CD4-positive, alpha-beta memory T cell (primary cell): ENCODE measurements at regions of chr4 and their contacts with region 1.

Region 1: DNA sequence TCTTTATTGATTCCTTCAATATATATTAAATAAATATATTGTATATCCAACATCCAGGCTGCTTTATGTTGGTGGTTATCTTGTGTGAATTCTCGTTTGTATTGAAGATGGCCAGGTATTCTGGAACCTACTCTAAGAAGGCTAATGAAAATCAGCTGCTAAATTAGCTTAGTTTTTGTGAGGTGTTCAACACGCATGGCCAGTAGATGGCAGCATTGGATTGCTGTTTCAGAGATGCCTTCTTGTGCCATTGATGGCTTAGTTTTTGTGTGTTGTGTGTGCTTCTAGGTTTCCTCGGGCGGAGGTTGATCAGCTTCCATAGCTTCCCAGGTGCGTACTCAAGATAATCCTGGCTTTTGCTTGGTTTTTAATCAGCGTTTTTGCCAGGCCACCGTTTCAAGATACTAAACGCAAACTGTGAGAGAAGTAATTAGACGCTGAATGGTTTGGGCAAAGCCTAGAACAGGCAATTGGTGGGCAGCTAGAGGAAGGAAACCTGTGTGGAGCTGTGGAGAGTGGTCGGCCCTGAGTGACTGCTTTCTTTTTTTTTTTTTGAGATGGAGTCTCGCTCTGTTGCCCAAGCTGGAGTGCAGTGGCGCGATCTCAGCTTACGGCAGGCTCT is 15.1 kb downstream of the NOCT start:
- DNase-seq: peak; percentile 72 to 76 (median 74)
- H3K4me3 ChIP-seq: no peak overlapping the region
- H3K4me3 Mint-ChIP-seq: no peak overlapping the region
- H3K27ac ChIP-seq: no peak overlapping the region
- H3K27ac Mint-ChIP-seq: peak overlapping the region in 5 of 7 donors; percentile 0 to 58 (median 19)
- H3K4me1 ChIP-seq: peaks cover 3% of the 10 kb centered on the region
- H3K4me1 Mint-ChIP-seq: peaks cover 6 to 11% (median 8%) of the 10 kb centered on the region in 4 donors
- H3K27me3 ChIP-seq: no peaks in the 10 kb centered on the region
- H3K27me3 Mint-ChIP-seq: no peaks in the 10 kb centered on the region

Region 2: GRCh38 chr4:138475116-138475515 is 555.6 kb before region 1 on chr4:
- CTCF ChIA-PET with region 1: no interaction called
- POLR2A ChIA-PET with region 1: no interaction called
- intact Hi-C with region 1: no loop called
- DNase-seq: no peak
- H3K4me3 ChIP-seq: no peak overlapping the region
- H3K4me3 Mint-ChIP-seq: no peak overlapping the region
- H3K27ac ChIP-seq: no peak overlapping the region
- H3K27ac Mint-ChIP-seq: no peak overlapping the region
- H3K4me1 ChIP-seq: no peaks in the 10 kb centered on the region
- H3K4me1 Mint-ChIP-seq: no peaks in the 10 kb centered on the region
- H3K27me3 ChIP-seq: no peaks in the 10 kb centered on the region
- H3K27me3 Mint-ChIP-seq: no peaks in the 10 kb centered on the region

Region 3: GRCh38 chr4:139015269-139015947 is 15.3 kb before region 1 on chr4 and contains the start of gene NOCT:
- CTCF ChIA-PET with region 1: interaction called, 122 read pairs
- POLR2A ChIA-PET with region 1: interaction called, 19 read pairs
- intact Hi-C with region 1: no loop called
- DNase-seq: peak; percentile 90 to 96 (median 93)
- H3K4me3 ChIP-seq: peak within 1 kb of the TSS; percentile 20 to 66
- H3K4me3 Mint-ChIP-seq: peak within 1 kb of the TSS; percentile 87 to 94 (median 90)
- H3K27ac ChIP-seq: peak within 1 kb of the TSS; percentile 84
- H3K27ac Mint-ChIP-seq: peak within 1 kb of the TSS; percentile 93 to 100 (median 99)
- H3K4me1 ChIP-seq: peaks cover 18% of the 10 kb centered on the region
- H3K4me1 Mint-ChIP-seq: peaks cover 13 to 44% (median 17%) of the 10 kb centered on the region in 4 donors
- H3K27me3 ChIP-seq: no peaks in the 10 kb centered on the region
- H3K27me3 Mint-ChIP-seq: no peaks in the 10 kb centered on the region
- total RNA-seq, gene NOCT: 1.4 to 1.7 TPM

Region 4: DNA sequence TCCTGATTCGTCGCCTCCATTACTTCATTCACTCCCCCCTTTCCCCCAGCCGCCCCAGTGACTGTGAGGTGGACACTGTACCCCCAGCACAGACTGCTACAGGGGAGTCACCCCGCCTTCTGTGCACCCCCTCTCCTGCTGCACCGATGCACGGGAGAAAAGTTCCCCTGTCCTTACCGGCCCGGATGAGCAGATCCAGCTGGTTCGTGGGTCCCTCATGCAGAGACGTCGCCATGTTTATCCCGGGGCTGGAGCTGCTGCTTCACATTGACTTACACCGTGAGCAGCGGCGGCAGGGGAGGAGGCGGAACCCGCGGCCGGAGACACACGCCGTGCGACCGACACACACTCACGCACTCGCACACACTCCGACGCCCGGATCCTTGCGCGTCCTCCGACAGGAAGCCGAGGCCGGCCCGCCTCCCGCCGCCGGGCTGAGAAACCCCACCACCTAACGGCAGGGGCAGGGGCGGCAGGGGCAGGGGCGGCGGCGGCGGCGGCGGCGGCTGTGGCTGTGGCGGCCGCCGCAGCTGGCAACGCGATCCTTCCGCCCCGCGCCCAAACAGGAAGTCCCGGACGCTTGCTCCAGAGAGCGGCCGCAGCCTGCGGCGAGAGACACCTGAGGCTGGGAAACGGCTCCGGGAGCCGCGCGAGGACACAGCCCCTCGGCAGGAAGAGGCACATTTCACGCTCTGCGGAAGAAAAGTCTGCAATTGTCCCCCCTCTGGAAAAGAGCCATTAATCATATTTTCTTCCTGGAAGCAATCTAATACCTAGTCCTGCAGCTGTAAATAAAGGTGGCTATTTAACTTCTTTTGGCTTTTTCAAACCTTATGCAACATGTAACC is 53.5 kb after region 1 on chr4:
- CTCF ChIA-PET with region 1: interaction called, 53 read pairs
- POLR2A ChIA-PET with region 1: interaction called, 25 read pairs
- intact Hi-C with region 1: loop called (anchors 1 kb)
- DNase-seq: peak; percentile 84 to 89 (median 85)
- H3K4me3 ChIP-seq: peak overlapping the region; percentile 73 to 99
- H3K4me3 Mint-ChIP-seq: peak overlapping the region; percentile 89 to 100 (median 92)
- H3K27ac ChIP-seq: peak overlapping the region; percentile 96
- H3K27ac Mint-ChIP-seq: peak overlapping the region; percentile 91 to 97 (median 94)
- H3K4me1 ChIP-seq: peaks cover 37% of the 10 kb centered on the region
- H3K4me1 Mint-ChIP-seq: peaks cover 26 to 52% (median 36%) of the 10 kb centered on the region in 4 donors
- H3K27me3 ChIP-seq: no peaks in the 10 kb centered on the region
- H3K27me3 Mint-ChIP-seq: no peaks in the 10 kb centered on the region

Region 5: GRCh38 chr4:139229534-139230039 is 198.9 kb after region 1 on chr4:
- CTCF ChIA-PET with region 1: interaction called, 16 read pairs
- POLR2A ChIA-PET with region 1: no interaction called
- intact Hi-C with region 1: loop called (anchors 1 kb)
- DNase-seq: peak in 4 of 5 donors; percentile 42 to 54 (median 48)
- H3K4me3 ChIP-seq: no peak overlapping the region
- H3K4me3 Mint-ChIP-seq: no peak overlapping the region
- H3K27ac ChIP-seq: no peak overlapping the region
- H3K27ac Mint-ChIP-seq: no peak overlapping the region
- H3K4me1 ChIP-seq: no peaks in the 10 kb centered on the region
- H3K4me1 Mint-ChIP-seq: peaks cover 0 to 3% (median 1%) of the 10 kb centered on the region in 4 donors
- H3K27me3 ChIP-seq: no peaks in the 10 kb centered on the region
- H3K27me3 Mint-ChIP-seq: no peaks in the 10 kb centered on the region

Region 6: DNA sequence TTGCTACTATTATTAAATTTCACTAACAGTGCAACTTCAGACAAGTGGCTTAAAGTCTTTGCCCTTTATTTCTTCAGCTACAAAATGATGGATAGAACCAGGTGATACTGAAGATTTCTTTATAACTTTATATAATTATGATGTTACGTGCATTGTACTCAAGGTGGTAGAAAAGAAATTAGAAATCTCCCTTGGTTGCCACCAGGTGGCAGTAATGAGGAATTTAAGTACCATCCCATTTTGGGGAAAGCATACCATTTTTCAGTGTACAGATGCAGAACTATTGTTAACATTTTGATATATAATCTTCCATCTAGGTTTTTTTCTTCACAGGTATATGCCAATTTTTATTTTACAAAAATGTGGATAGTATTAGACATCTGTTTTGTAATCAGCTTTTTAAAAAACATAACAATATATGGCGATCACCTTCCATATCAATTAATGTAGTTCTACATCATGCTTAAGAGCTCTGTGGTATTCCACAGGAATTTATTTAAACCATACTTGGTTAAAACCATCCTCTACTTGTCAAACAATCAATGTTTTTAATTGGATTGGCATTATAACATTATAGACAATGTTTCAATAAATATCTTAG is 385.4 kb after region 1 on chr4:
- CTCF ChIA-PET with region 1: interaction called, 6 read pairs
- POLR2A ChIA-PET with region 1: no interaction called
- intact Hi-C with region 1: loop called (anchors 10 kb)
- DNase-seq: peak in 4 of 5 donors; percentile 28 to 47 (median 42)
- H3K4me3 ChIP-seq: no peak overlapping the region
- H3K4me3 Mint-ChIP-seq: no peak overlapping the region
- H3K27ac ChIP-seq: no peak overlapping the region
- H3K27ac Mint-ChIP-seq: no peak overlapping the region
- H3K4me1 ChIP-seq: no peaks in the 10 kb centered on the region
- H3K4me1 Mint-ChIP-seq: peaks cover 4 to 17% (median 5%) of the 10 kb centered on the region in 4 donors
- H3K27me3 ChIP-seq: no peaks in the 10 kb centered on the region
- H3K27me3 Mint-ChIP-seq: no peaks in the 10 kb centered on the region

Region 7: DNA sequence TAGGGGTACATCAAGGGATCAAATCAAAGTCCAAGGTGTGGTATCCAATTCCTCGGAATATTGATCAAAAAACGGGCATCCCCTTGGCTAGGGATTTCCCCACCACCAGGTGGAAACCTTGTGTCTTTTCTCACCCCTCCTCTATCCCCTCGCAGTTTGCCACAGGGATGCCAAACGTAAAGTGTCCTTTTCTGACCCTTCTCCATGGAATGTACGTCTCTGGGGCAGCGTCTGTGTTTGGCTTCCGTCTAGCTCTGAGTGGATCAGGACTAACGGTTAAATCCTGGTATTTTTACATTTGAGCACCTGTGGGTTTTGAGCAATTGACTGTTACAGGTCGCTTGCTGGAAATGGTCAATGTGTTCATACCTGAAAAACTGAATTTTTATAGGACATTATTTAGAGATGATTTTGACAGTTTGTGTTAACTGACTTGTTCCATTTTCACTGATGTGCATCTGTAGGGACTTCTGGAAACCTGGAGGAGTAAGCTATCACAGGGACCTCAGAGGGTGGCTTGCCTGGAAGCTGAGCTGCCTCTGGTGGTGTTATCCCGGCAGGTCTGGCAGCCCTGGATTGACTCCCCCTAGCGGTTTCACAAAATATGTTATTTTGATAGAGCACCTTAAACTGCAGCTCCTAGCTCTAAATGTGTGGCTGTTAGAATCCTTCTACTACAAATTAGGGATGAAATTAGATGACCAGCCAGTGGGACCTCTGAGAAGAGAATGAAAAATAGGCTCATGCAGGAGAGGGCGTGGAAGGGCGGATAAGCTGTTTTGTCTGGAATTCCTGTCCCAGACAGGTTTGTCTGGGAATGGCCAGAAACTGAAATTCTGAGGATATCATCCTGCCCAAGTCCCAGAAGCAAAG is 626.1 kb after region 1 on chr4:
- CTCF ChIA-PET with region 1: interaction called, 49 read pairs
- POLR2A ChIA-PET with region 1: no interaction called
- intact Hi-C with region 1: no loop called
- DNase-seq: peak; percentile 59 to 65 (median 62)
- H3K4me3 ChIP-seq: no peak overlapping the region
- H3K4me3 Mint-ChIP-seq: peak overlapping the region in 6 of 8 donors; percentile 23 to 75 (median 72)
- H3K27ac ChIP-seq: no peak overlapping the region
- H3K27ac Mint-ChIP-seq: peak overlapping the region in 6 of 7 donors; percentile 13 to 88 (median 68)
- H3K4me1 ChIP-seq: peaks cover 18% of the 10 kb centered on the region
- H3K4me1 Mint-ChIP-seq: peaks cover 15 to 26% (median 20%) of the 10 kb centered on the region in 4 donors
- H3K27me3 ChIP-seq: no peaks in the 10 kb centered on the region
- H3K27me3 Mint-ChIP-seq: peaks cover 0 to 2% of the 10 kb centered on the region in 2 donors